Activated B cell treated with CpG ODN at 0.5 μM for 24 hours (primary cell): ENCODE measurements at regions of chr16 and their contacts with region 1.

Region 1: DNA sequence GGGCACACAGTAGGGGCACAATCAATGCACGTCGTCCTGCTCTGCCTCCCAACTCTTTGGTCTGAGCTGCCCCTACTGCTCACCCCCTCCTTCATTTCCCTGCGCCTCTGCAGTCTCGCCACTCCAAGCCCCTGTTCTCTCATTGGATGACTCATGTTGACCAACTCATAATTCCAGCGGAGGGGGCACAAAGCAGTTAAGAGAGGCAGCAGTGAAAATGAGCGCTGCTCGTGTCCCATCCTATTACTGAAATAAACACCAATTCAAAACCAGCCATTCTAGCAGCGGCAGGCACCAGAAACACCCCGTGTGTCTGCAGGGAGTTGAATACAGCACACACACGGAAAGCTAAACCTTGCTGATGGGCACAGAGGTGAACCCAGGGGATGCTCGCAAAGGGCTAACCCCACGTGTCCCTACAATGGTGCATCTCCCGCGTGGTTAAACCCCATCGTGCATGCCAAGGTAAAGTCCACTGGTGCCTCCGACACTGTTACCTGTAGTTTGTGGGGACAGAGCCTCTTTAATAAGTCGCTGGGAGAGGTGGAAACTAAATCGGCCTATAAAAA is 310.4 kb downstream of the XYLT1 start:
- DNase-seq: no peak
- ATAC-seq: no peak
- H3K4me3 Mint-ChIP-seq: no peak overlapping the region
- H3K27ac Mint-ChIP-seq: no peak overlapping the region
- H3K4me1 Mint-ChIP-seq: peaks cover 32% of the 10 kb centered on the region
- H3K27me3 Mint-ChIP-seq: no peaks in the 10 kb centered on the region
- CTCF ChIP-seq: no peak

Region 2: GRCh38 chr16:17125671-17126070 is 34.7 kb before region 1 on chr16:
- CTCF ChIA-PET with region 1: no interaction called
- POLR2A ChIA-PET with region 1: no interaction called
- intact Hi-C with region 1: no loop called
- DNase-seq: no peak
- ATAC-seq: no peak
- H3K4me3 Mint-ChIP-seq: no peak overlapping the region
- H3K27ac Mint-ChIP-seq: no peak overlapping the region
- H3K4me1 Mint-ChIP-seq: peaks cover 9% of the 10 kb centered on the region
- H3K27me3 Mint-ChIP-seq: no peaks in the 10 kb centered on the region
- CTCF ChIP-seq: no peak

Region 3: GRCh38 chr16:17224879-17225281 is 64.5 kb after region 1 on chr16:
- CTCF ChIA-PET with region 1: no interaction called
- POLR2A ChIA-PET with region 1: no interaction called
- intact Hi-C with region 1: loop called (anchors 10 kb)
- DNase-seq: no peak
- ATAC-seq: peak; percentile 7
- H3K4me3 Mint-ChIP-seq: no peak overlapping the region
- H3K27ac Mint-ChIP-seq: no peak overlapping the region
- H3K4me1 Mint-ChIP-seq: peaks cover 32% of the 10 kb centered on the region
- H3K27me3 Mint-ChIP-seq: no peaks in the 10 kb centered on the region
- CTCF ChIP-seq: no peak

Region 4: DNA sequence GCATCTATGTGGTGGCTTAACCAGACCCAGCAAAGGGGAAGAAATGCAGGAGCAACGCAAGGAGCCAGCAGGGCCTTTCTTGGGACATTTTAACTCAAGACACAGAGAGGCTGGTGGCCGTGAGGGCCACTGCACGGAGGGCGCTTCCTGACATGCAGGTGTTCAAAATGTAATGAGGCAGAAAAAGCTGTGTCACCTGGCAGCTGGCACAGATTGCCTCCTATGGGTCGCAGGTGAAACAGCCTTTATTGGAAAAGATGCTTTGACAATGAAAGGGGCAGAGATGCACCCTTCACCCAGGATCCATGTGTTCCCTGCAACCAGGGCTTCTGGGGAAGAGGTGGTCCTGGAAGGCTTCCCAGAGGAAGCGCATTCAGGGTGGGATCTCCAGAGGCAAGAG is 91.1 kb after region 1 on chr16:
- CTCF ChIA-PET with region 1: no interaction called
- POLR2A ChIA-PET with region 1: no interaction called
- intact Hi-C with region 1: no loop called
- DNase-seq: no peak
- ATAC-seq: no peak
- H3K4me3 Mint-ChIP-seq: no peak overlapping the region
- H3K27ac Mint-ChIP-seq: peak overlapping the region; percentile 33
- H3K4me1 Mint-ChIP-seq: peaks cover 34% of the 10 kb centered on the region
- H3K27me3 Mint-ChIP-seq: no peaks in the 10 kb centered on the region
- CTCF ChIP-seq: no peak